Tibial artery (tissue), 4 donors: ENCODE measurements at regions of chr2 and their contacts with region 1.

Region 1: DNA sequence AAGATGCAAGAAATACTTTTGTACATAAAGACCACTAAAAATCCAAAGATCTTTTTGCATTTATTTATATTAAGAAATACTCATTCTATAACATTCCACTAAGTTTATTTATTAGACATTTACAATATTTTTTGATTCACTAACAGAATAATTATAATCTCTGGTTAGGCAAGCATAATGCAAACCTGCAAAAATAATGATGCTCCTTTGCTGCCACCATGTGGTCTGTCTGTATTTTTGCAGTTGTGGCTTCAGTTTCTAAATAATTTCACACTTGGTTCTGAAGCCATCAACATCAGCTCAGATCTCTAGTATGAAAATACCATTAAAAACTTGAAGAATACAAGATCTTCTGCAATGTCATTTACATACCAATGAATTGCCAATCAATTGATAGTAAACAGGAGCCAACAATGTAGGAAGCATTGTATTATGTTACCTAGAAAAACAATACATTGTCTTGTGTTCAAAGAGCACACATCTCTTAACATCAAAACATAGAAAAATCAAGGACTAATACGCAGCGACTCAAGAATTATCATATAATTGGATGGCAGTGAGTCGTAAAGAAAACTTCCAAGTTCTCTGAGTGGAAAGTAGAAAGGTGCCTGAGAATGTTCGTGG is 28.8 kb upstream of the WDR75 start:
- DNase-seq: no peak
- H3K4me3 ChIP-seq: no peak overlapping the region
- H3K27ac ChIP-seq: peak overlapping the region; percentile 65 to 72
- H3K4me1 ChIP-seq: peaks cover 0 to 28% (median 10%) of the 10 kb centered on the region in 4 donors
- H3K27me3 ChIP-seq: no peaks in the 10 kb centered on the region
- CTCF ChIP-seq: peak; percentile 67 to 90

Region 2: GRCh38 chr2:188524519-188525113 is 887.8 kb before region 1 on chr2:
- intact Hi-C with region 1: loop called (anchors 10 kb)
- DNase-seq: no peak
- H3K4me3 ChIP-seq: no peak overlapping the region
- H3K27ac ChIP-seq: peak overlapping the region in 1 of 2 donors; percentile 60
- H3K4me1 ChIP-seq: peaks cover 0 to 45% (median 6%) of the 10 kb centered on the region in 4 donors
- H3K27me3 ChIP-seq: no peaks in the 10 kb centered on the region
- CTCF ChIP-seq: peak; percentile 65 to 74

Region 3: DNA sequence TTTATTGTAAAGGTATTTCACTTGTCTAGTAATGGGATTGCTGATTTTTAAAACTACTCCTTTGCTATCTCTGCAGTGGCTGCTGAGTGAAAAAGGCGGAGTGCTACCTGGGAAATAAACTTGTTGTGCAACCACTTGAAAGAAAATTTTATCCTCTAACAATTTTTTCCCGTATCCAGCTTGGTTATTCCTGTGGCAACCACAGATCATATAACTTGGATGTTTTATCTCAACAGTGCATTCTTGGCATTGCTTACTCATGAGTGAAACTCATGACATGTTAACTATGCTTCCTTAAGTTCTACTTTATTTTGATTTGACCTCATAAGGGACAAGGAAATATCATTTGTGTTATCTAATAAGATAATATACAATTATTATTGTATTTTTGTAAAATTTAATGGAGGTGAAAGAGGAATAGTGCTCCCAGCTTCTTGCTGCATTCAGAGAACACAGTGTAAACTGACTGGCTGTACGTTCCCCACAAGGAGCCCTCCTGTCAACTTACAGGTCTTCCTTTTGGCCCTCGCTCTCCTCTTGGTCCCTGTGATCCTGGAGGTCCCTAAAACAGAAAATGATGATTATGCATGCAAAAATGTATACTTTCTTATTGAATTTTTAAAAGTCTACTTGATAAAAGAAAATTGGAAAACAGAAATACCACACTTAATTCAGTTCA is 315.5 kb before region 1 on chr2:
- intact Hi-C with region 1: loop called (anchors 10 kb)
- DNase-seq: no peak
- H3K4me3 ChIP-seq: no peak overlapping the region
- H3K27ac ChIP-seq: peak overlapping the region; percentile 21 to 27
- H3K4me1 ChIP-seq: peaks cover 0 to 60% (median 14%) of the 10 kb centered on the region in 4 donors
- H3K27me3 ChIP-seq: no peaks in the 10 kb centered on the region
- CTCF ChIP-seq: no peak

Region 4: DNA sequence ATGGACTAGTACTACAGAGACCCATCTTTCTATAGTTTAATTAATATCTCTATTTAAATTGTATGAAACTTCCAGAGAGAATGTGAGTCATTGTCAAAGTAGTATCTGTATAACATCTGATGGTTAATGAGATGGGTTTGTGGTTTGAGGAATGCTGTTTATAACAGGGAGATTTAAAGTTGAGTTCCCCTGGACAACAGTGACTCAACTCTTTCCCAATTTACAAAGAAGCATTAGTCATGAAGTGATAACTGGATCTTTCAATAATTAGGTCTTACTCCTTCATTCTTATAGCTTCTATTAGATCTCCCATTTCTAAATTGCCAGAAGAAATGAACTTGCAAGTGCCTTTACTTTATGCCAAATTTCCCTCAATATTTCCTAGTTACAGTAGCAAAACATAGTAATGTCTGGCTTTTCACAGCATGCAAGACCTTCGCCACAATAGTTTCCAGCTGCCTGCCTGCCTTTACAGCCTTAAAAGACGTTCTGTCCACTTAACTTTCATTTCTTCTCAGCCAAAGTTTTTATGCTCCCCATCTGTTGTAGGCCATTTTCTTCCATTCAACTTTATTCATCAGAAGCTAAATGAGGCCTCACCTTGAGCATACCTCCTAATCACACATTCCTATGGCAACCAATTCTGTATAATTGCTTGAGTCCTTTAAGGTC is 18.9 kb before region 1 on chr2:
- intact Hi-C with region 1: no loop called
- DNase-seq: no peak
- H3K4me3 ChIP-seq: no peak overlapping the region
- H3K27ac ChIP-seq: peak overlapping the region; percentile 44 to 47
- H3K4me1 ChIP-seq: peaks cover 0 to 5% (median 2%) of the 10 kb centered on the region in 4 donors
- H3K27me3 ChIP-seq: no peaks in the 10 kb centered on the region
- CTCF ChIP-seq: no peak